Gastrocnemius medialis (tissue), 4 donors: ENCODE measurements at regions of chr16 and their contacts with region 1.

Region 1: DNA sequence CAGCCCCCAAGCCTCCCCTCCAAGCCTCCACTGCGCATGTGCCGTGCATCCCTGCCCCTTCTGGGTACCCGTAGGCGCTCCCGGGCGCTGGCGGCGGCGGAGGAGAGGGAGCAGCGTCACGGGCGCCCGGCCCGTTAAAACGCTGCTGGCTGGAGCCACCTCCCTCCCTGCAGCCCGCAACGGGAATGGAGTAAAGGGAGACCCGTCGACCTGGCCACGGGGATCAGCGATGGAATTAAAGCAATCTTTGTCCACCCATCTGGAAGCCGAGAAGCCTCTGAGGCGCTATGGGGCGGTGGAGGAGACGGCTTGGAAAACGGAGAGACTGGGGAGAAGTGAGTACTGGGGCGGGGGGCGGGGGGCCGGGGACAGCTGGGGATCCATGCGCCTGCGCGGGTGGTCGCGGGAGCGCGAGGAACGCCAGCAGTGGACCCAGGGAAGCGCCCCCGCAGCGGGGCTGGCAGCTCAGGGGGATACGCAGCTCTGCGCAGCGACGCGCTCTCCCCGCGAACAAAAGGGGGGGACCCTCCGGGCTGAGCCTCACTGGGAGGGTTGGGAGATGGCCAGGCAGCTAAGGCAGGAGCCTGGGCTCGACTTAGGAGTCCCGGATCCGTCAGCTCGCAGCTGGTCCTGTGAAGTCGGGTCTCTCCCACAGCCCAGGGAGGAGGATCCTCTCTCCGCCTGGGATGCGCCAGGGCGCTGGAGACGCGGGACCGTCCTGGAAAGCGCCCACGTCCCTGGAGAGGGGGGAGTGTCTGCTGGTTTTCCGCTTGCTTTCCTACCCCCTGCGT is at the start of gene BMERB1:
- DNase-seq: peak; percentile 62 to 75
- ATAC-seq: peak; percentile 75 to 82
- H3K4me3 ChIP-seq: peak within 1 kb of the TSS; percentile 86 to 95 (median 86)
- H3K27ac ChIP-seq: peak within 1 kb of the TSS; percentile 82 to 93 (median 88)
- H3K4me1 ChIP-seq: peaks cover 10 to 15% of the 10 kb centered on the region in 2 donors
- H3K27me3 ChIP-seq: no peaks in the 10 kb centered on the region
- CTCF ChIP-seq: no peak
- POLR2A ChIP-seq: peak; percentile 76 to 85
- total RNA-seq, gene BMERB1: 112 to 392 (median 237) TPM

Region 2: DNA sequence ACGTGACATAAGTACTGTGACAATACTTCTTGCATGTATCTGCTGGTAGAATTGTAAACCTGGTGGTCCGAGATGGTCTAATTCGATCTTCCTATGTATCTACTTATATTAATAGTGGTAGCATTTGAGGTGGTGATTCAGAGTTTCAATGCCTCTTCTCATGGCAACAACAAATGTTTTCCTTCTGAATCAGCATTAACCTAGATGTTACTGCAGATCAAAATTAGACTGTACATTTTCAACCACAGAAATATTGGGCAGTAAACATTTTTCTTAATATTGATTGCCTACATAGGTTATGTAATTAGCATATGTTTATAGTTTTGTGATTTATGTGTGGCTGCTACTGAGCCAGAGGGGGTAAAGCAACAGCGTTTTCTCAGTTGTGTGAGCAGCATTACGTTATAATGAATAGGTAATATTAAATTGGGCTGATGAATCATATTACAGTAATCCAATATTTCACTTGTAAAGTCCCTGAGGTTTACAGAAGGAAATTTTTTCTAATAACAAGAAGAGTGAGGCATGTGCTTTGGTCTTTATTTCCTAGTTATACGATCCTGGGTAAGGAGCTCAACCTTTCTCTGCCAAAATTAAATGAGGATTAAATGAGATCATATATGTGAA is 19.1 kb before region 1 on chr16:
- in situ Hi-C with region 1: no loop called
- intact Hi-C with region 1: loop called (anchors 2 kb)
- DNase-seq: no peak
- ATAC-seq: no peak
- H3K4me3 ChIP-seq: no peak overlapping the region
- H3K27ac ChIP-seq: peak overlapping the region in 2 of 4 donors; percentile 20 to 47
- H3K4me1 ChIP-seq: peaks cover 3 to 14% of the 10 kb centered on the region in 2 donors
- H3K27me3 ChIP-seq: no peaks in the 10 kb centered on the region
- CTCF ChIP-seq: no peak
- POLR2A ChIP-seq: no peak

Region 3: DNA sequence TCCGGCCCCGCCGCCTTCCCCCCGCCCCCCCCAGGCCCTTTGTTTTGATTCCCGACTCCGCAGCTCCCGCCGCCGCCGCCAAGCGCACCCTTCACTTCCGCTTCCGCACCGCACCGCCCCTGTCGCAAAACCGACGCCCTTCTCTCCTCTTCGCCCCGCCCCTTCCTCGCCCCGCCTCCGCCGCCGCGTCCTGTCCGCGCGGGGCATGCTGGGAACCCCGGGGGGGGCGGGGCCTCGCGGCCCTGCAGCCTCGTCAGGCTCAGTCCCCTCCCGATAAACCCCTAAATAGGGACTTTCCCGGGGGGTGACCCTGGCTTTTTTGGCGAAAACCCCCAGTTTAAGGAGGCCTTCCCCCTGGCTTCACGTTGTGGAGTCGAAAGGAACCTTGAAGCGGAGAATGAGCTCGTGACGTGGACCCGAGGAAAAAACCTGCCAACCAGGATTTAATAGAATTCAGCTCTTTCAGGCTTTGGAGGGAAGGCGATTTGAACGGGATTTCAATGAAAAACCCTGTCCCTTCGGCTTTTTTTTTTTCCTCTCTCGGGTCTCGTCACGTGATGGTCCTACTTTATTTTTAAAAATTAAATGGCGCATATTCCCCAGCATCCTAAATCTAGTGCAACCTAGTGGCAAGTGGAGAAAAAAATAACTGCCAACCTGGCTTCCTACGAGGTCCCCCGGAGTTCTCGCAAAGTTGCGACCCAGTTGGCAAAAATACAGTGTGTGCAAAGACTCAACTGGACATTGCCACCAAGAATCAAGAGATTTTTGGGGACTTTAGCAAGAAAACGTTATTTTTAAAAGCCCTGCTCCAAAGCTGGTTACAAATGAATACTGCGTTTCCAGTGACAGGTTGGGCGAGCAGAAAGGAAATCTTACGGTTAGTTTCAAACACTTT is 208.7 kb after region 1 on chr16 and contains the start of gene MARF1:
- in situ Hi-C with region 1: no loop called
- intact Hi-C with region 1: loop called (anchors 10 kb)
- DNase-seq: peak; percentile 97
- ATAC-seq: peak; percentile 86 to 92
- H3K4me3 ChIP-seq: peak within 1 kb of the TSS; percentile 83 to 98 (median 96)
- H3K27ac ChIP-seq: peak within 1 kb of the TSS; percentile 97 to 100 (median 99)
- H3K4me1 ChIP-seq: peaks cover 24% of the 10 kb centered on the region in 2 donors
- H3K27me3 ChIP-seq: no peaks in the 10 kb centered on the region
- CTCF ChIP-seq: peak; percentile 28 to 61 (median 46)
- POLR2A ChIP-seq: peak; percentile 98
- total RNA-seq, gene MARF1: 19.5 to 29.8 (median 26.5) TPM